Naive thymus-derived CD4-positive, alpha-beta T cell (primary cell): ENCODE measurements at regions of chr5 and their contacts with region 1.

Region 1: DNA sequence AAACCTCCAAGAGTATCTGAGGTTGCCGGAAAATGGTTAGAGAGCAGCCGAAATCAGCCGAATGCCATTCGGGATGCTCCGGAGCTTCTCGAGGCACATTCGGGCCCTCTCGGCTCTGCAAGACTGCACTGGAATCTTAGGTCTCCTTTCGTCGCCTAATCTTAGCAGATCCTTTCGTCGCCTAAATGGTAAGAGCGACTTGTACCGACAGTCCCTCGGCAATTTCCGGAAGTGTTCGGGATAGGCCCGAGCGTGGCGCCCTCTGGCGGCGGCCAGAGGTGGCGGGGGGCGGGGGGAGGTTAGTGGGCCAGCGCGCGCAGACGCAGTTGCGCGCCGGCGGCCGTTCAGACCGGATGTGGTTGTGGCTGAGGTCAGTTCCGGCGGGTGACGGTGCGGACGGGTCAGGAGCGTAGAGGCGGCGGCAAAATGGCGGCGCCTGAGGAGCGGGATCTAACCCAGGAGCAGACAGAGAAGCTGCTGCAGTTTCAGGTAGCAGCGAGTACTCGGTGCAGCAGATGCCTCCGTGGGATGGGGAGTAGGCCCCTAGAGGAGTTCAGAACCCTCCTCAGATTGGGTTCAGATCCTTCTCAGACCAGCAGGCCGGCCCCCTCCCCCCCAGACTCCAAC is at the start of gene FAF2:
- DNase-seq: peak; percentile 97 to 100 (median 99)
- ATAC-seq: peak; percentile 97
- H3K4me3 ChIP-seq: peak within 1 kb of the TSS; percentile 99
- H3K4me3 Mint-ChIP-seq: peak within 1 kb of the TSS; percentile 92 to 99 (median 98)
- H3K27ac ChIP-seq: peak within 1 kb of the TSS; percentile 94
- H3K27ac Mint-ChIP-seq: peak within 1 kb of the TSS; percentile 81 to 99 (median 98)
- H3K4me1 ChIP-seq: peaks cover 22 to 23% of the 10 kb centered on the region in 2 donors
- H3K4me1 Mint-ChIP-seq: peaks cover 25 to 49% (median 40%) of the 10 kb centered on the region in 7 donors
- H3K27me3 ChIP-seq: no peaks in the 10 kb centered on the region
- H3K27me3 Mint-ChIP-seq: peaks cover 0 to 8% (median 0%) of the 10 kb centered on the region in 5 donors
- total RNA-seq, gene FAF2: 28.0 to 43.2 (median 31.2) TPM

Region 2: DNA sequence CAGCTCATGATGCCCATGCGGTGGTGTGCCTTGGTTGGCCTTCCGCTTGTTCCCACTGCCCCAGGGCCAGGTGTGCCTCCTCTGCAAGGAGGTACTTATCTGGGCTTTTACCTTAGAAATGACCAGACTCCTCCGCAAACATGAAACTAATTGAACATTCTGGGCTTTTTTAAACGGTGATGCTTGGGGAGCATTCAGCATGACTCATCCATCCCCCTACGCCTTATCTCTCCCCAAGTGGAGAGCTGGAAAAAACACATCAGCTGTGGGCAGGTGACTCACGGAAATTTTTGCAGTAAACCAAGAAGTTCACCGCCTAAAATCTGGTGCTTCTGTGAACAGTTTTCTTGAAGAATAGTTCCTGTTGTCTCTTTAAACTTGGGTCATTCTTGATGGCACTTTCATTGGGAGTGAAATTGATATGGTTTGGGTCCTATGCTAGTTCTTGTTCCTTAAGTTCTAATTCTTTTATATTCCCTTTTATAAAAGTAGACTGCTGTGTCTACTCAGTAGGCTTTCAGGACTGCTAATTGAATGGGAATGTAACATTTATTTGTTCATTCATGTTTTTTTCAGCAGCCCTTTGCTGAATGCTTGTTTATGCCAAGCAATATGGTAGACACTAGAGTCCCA is 930.2 kb before region 1 on chr5:
- CTCF ChIA-PET with region 1: no interaction called
- POLR2A ChIA-PET with region 1: no interaction called
- intact Hi-C with region 1: loop called in 1 of 2 experiments (anchors 10 kb)
- DNase-seq: peak in 2 of 9 donors; percentile 62 to 81
- ATAC-seq: no peak
- H3K4me3 ChIP-seq: no peak overlapping the region
- H3K4me3 Mint-ChIP-seq: peak overlapping the region; percentile 26 to 80 (median 54)
- H3K27ac ChIP-seq: peak overlapping the region; percentile 22
- H3K27ac Mint-ChIP-seq: peak overlapping the region; percentile 60 to 97 (median 93)
- H3K4me1 ChIP-seq: peaks cover 44 to 50% of the 10 kb centered on the region in 2 donors
- H3K4me1 Mint-ChIP-seq: peaks cover 47 to 87% (median 76%) of the 10 kb centered on the region in 7 donors
- H3K27me3 ChIP-seq: no peaks in the 10 kb centered on the region
- H3K27me3 Mint-ChIP-seq: no peaks in the 10 kb centered on the region

Region 3: DNA sequence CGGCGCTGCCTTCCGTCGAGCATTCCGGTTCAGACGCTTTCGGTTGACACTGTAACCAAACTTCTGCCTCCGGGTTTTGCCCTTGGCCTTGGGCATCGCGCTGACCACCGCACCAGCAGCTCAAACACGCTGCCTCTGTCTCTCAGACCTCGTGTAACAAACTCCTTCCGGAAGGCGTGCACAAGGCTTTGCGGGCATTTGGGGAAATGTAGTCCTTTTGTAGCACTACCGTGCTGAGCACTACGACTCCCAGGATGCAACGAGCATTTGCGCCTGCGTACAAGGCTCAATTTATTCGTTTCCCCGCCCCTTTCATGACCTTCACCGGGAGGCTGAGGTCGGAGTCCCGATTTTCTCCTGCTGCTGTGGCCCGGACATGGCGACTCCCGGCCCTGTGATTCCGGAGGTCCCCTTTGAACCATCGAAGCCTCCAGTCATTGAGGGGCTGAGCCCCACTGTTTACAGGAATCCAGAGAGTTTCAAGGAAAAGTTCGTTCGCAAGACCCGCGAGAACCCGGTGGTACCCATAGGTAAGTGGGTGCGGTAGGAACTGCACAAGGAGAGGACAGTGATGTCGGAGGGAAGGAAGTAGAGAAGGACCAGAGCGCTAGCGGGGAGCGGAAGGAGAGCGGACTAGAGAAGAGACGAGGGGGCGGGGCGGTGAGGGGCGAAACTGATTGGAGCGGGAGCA is 59.5 kb before region 1 on chr5 and contains the starts of genes HIGD2A and NOP16:
- CTCF ChIA-PET with region 1: no interaction called
- POLR2A ChIA-PET with region 1: interaction called, 3 read pairs
- intact Hi-C with region 1: loop called (anchors 1 kb)
- DNase-seq: peak; percentile 89 to 99 (median 98)
- ATAC-seq: peak; percentile 95
- H3K4me3 ChIP-seq: peak within 1 kb of the TSS; percentile 95
- H3K4me3 Mint-ChIP-seq: peak within 1 kb of the TSS; percentile 94 to 100 (median 99)
- H3K27ac ChIP-seq: peak within 1 kb of the TSS; percentile 93
- H3K27ac Mint-ChIP-seq: peak within 1 kb of the TSS; percentile 91 to 100 (median 99)
- H3K4me1 ChIP-seq: peaks cover 18% of the 10 kb centered on the region in 2 donors
- H3K4me1 Mint-ChIP-seq: peaks cover 14 to 42% (median 35%) of the 10 kb centered on the region in 7 donors
- H3K27me3 ChIP-seq: no peaks in the 10 kb centered on the region
- H3K27me3 Mint-ChIP-seq: no peaks in the 10 kb centered on the region
- total RNA-seq, gene HIGD2A: 86.8 to 124 (median 112) TPM
- total RNA-seq, gene NOP16: 12.8 to 35.3 (median 22.2) TPM

Region 4: DNA sequence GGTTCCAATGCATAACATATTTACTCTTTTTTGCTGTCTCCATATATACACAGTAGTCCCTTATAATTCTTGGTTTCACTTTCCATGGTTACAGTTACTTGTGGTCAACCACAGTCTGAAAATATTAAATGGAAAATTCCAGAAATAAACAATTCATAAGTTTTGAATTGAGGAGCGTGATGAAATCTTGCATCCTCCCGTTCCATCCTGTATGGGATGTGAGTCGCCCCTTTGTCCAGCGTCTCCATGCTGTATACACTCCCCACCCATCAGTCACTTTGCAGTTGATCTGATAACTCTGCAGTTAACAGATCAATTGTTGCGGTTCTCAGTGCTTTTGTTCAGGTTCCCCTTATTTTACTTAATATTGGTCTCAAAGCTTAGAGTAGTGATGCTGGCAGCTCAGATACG is 11.4 kb before region 1 on chr5:
- CTCF ChIA-PET with region 1: no interaction called
- POLR2A ChIA-PET with region 1: interaction called, 3 read pairs
- intact Hi-C with region 1: loop called in 1 of 2 experiments (anchors 1 kb)
- DNase-seq: no peak
- ATAC-seq: peak; percentile 53
- H3K4me3 ChIP-seq: peak overlapping the region; percentile 30
- H3K4me3 Mint-ChIP-seq: peak overlapping the region in 9 of 10 donors; percentile 50 to 80 (median 73)
- H3K27ac ChIP-seq: no peak overlapping the region
- H3K27ac Mint-ChIP-seq: peak overlapping the region in 3 of 9 donors; percentile 15 to 71 (median 28)
- H3K4me1 ChIP-seq: peaks cover 0 to 5% of the 10 kb centered on the region in 2 donors
- H3K4me1 Mint-ChIP-seq: peaks cover 7 to 13% (median 9%) of the 10 kb centered on the region in 7 donors
- H3K27me3 ChIP-seq: no peaks in the 10 kb centered on the region
- H3K27me3 Mint-ChIP-seq: peaks cover 0 to 15% (median 6%) of the 10 kb centered on the region in 5 donors

Region 5: DNA sequence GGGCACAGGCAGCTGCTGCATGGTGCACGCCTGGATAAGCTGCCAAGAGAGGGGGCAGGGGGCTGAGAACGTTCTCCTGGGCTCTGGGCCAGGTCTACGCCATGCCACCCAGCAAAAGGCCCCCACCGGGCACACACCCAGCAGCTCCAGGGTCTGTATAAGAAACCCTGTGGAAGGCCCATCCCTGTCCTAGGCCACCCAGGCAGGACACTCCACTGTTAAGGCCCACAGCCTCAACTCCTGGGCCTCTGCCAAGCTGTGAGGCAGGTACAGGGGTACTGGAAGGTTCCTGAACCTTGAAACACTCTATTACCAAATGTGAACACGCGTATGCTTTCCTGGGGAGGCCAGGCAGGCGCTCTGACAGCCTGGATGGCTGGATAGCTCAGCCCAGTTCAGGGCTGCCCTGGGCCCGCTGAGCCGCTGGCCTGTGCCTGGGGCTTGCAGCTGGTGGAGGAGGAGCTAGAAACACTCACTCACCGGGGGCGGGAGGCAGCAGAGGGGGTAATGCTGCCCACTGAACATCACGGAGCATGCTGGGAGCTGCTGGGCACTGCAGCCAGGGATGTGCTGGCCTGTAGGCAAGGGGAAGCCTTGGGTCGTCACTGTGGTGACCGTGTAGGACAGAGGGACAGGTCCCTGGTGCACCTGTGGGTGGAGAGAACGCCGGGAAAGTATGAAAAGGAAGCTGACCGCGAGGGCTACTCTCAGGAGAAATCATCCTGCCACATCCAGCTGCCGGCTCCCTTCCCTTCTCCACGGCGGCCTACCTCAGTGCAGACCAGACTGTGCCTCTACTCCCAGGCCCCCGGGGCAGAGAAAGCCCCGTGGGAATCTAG is 83.1 kb after region 1 on chr5:
- CTCF ChIA-PET with region 1: interaction called, 5 read pairs
- POLR2A ChIA-PET with region 1: interaction called, 91 read pairs
- intact Hi-C with region 1: no loop called
- DNase-seq: peak in 1 of 9 donors; percentile 23
- ATAC-seq: no peak
- H3K4me3 ChIP-seq: peak overlapping the region; percentile 20
- H3K4me3 Mint-ChIP-seq: peak overlapping the region; percentile 71 to 99 (median 82)
- H3K27ac ChIP-seq: peak overlapping the region; percentile 96
- H3K27ac Mint-ChIP-seq: peak overlapping the region; percentile 79 to 97 (median 89)
- H3K4me1 ChIP-seq: peaks cover 55 to 59% of the 10 kb centered on the region in 2 donors
- H3K4me1 Mint-ChIP-seq: peaks cover 32 to 55% (median 45%) of the 10 kb centered on the region in 7 donors
- H3K27me3 ChIP-seq: no peaks in the 10 kb centered on the region
- H3K27me3 Mint-ChIP-seq: no peaks in the 10 kb centered on the region

Region 6: GRCh38 chr5:176583081-176583480 is 135.0 kb after region 1 on chr5:
- CTCF ChIA-PET with region 1: no interaction called
- POLR2A ChIA-PET with region 1: no interaction called
- intact Hi-C with region 1: no loop called
- DNase-seq: no peak
- ATAC-seq: no peak
- H3K4me3 ChIP-seq: no peak overlapping the region
- H3K4me3 Mint-ChIP-seq: no peak overlapping the region
- H3K27ac ChIP-seq: no peak overlapping the region
- H3K27ac Mint-ChIP-seq: no peak overlapping the region
- H3K4me1 ChIP-seq: no peaks in the 10 kb centered on the region
- H3K4me1 Mint-ChIP-seq: no peaks in the 10 kb centered on the region
- H3K27me3 ChIP-seq: no peaks in the 10 kb centered on the region
- H3K27me3 Mint-ChIP-seq: no peaks in the 10 kb centered on the region

Region 7: GRCh38 chr5:176596689-176597416 is 148.8 kb after region 1 on chr5:
- CTCF ChIA-PET with region 1: interaction called, 3 read pairs
- POLR2A ChIA-PET with region 1: no interaction called
- intact Hi-C with region 1: loop called in 1 of 2 experiments (anchors 1 kb)
- DNase-seq: peak; percentile 53 to 72 (median 67)
- ATAC-seq: peak; percentile 88
- H3K4me3 ChIP-seq: peak overlapping the region; percentile 41
- H3K4me3 Mint-ChIP-seq: peak overlapping the region; percentile 69 to 83 (median 79)
- H3K27ac ChIP-seq: peak overlapping the region; percentile 21
- H3K27ac Mint-ChIP-seq: peak overlapping the region in 7 of 9 donors; percentile 36 to 75 (median 50)
- H3K4me1 ChIP-seq: peaks cover 7% of the 10 kb centered on the region in 2 donors
- H3K4me1 Mint-ChIP-seq: peaks cover 4 to 8% (median 6%) of the 10 kb centered on the region in 7 donors
- H3K27me3 ChIP-seq: no peaks in the 10 kb centered on the region
- H3K27me3 Mint-ChIP-seq: peaks cover 0 to 4% (median 0%) of the 10 kb centered on the region in 5 donors

Region 8: DNA sequence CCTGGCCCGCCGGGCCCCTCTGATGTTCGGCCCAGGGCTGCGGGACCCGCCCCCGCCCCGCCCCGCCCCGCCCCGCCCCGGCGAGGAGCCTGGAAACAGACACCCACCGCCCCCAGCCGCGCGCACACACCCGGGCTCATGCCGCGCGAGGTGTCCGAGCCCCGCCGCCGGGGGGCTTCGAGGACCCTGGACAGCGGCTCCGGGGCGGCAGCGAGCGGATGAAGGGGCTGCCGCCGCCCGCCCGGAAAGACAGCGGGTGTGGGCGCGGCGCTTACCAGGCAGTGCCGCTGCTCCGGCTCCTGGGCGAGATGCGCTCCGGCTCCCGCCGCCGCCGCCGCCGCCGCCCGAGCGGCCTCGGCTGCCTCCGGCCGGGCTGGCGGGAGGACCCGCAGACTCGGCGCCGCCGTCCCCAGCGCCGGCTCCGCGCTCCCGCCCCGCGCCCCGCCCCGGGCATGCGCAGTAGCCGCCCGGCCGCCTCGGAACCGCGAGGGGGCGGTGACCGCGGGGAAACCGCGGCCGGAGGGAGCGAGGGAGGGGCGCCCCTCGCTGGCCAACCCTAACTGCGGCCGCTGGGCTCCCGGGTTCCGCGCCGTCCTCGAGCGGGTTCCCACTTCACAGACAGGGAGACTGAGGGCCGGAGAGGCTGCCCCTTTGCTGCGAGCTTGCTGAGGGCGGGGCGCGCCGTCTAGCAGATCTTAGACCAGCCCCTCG is 161.8 kb after region 1 on chr5 and contains the start of gene GPRIN1:
- CTCF ChIA-PET with region 1: no interaction called
- POLR2A ChIA-PET with region 1: no interaction called
- intact Hi-C with region 1: no loop called
- DNase-seq: peak in 5 of 9 donors; percentile 15 to 85 (median 39)
- ATAC-seq: peak; percentile 72
- H3K4me3 ChIP-seq: no peak within 1 kb of the TSS
- H3K4me3 Mint-ChIP-seq: peak within 1 kb of the TSS; percentile 82 to 95 (median 90)
- H3K27ac ChIP-seq: no peak within 1 kb of the TSS
- H3K27ac Mint-ChIP-seq: peak within 1 kb of the TSS in 3 of 9 donors; percentile 21 to 77 (median 45)
- H3K4me1 ChIP-seq: peaks cover 3 to 4% of the 10 kb centered on the region in 2 donors
- H3K4me1 Mint-ChIP-seq: peaks cover 4 to 17% (median 12%) of the 10 kb centered on the region in 7 donors
- H3K27me3 ChIP-seq: peaks cover 3 to 5% of the 10 kb centered on the region in 2 donors
- H3K27me3 Mint-ChIP-seq: peaks cover 20 to 44% (median 28%) of the 10 kb centered on the region in 5 donors
- total RNA-seq, gene GPRIN1: 0.08 to 2.3 (median 0.32) TPM in 4 of 5 experiments, not detected in the other

Region 9: GRCh38 chr5:177529247-177530203 is 1081.4 kb after region 1 on chr5:
- CTCF ChIA-PET with region 1: no interaction called
- POLR2A ChIA-PET with region 1: no interaction called
- intact Hi-C with region 1: no loop called
- DNase-seq: no peak
- ATAC-seq: no peak
- H3K4me3 ChIP-seq: no peak overlapping the region
- H3K4me3 Mint-ChIP-seq: no peak overlapping the region
- H3K27ac ChIP-seq: no peak overlapping the region
- H3K27ac Mint-ChIP-seq: peak overlapping the region in 6 of 9 donors; percentile 12 to 47 (median 43)
- H3K4me1 ChIP-seq: no peaks in the 10 kb centered on the region
- H3K4me1 Mint-ChIP-seq: peaks cover 0 to 4% (median 2%) of the 10 kb centered on the region in 7 donors
- H3K27me3 ChIP-seq: no peaks in the 10 kb centered on the region
- H3K27me3 Mint-ChIP-seq: no peaks in the 10 kb centered on the region